AG04450 (cell line): ENCODE measurements at regions of chr11 and their contacts with region 1.

Region 1: GRCh38 chr11:74185285-74185684 is 14.2 kb downstream of the PPME1 start:
- DNase-seq: no peak
- H3K4me3 ChIP-seq: no peak overlapping the region
- H3K27ac ChIP-seq: no peak overlapping the region
- H3K27me3 ChIP-seq: no peaks in the 10 kb centered on the region
- CTCF ChIP-seq: no peak

Region 2: DNA sequence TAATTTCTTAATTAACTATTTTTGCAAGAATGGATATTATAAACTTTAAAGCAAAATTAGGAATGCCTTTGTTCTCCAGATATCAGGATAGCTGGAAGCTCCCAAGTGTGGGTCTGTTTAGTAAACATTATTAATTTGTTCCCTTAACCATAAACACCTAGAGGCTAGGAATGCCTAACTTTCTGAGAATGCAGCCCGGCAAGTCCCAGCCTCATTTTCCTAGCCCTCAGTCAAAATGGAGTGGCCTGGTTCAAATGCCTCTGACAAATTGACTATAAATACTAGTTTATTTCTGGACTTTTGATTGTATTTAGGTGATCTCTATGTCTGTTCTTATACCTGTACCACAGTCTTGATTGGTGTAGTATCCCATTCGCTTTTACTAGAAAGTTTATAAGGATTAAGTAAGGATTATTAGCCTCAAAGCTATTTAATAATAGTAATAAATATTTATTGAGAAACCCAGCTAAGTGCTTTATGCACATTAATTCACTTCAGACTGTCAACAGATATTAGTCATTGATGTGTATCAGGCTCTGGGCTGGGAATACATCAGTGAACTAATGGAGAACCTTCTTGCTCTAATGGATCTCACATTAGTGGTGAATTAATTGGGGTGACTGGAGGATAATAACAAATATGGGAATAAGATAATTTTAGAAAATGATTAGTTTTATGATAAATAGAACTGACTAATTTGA is 11.7 kb after region 1 on chr11:
- CTCF ChIA-PET with region 1: interaction called, 11 read pairs
- POLR2A ChIA-PET with region 1: no interaction called
- DNase-seq: no peak
- H3K4me3 ChIP-seq: no peak overlapping the region
- H3K27ac ChIP-seq: no peak overlapping the region
- H3K27me3 ChIP-seq: no peaks in the 10 kb centered on the region
- CTCF ChIP-seq: no peak

Region 3: GRCh38 chr11:74462009-74462408 is 276.7 kb after region 1 on chr11:
- CTCF ChIA-PET with region 1: no interaction called
- POLR2A ChIA-PET with region 1: no interaction called
- DNase-seq: no peak
- H3K4me3 ChIP-seq: no peak overlapping the region
- H3K27ac ChIP-seq: no peak overlapping the region
- H3K27me3 ChIP-seq: peaks cover 38% of the 10 kb centered on the region
- CTCF ChIP-seq: no peak